ENCODE measurements at regions of chr12 and their contacts with region 1.

Region 1: GRCh38 chr12:113232840-113233585 is 11.7 kb downstream of the TPCN1 start:
- DNase-seq: peak; percentile 95 to 97 (median 96)
- H3K4me3 ChIP-seq: peak overlapping the region in 4 of 7 experiments; percentile 6 to 68 (median 48)
- H3K27ac ChIP-seq: peak overlapping the region; percentile 53 to 65
- H3K4me1 ChIP-seq: peaks cover 4 to 71% (median 57%) of the 10 kb centered on the region in 4 experiments
- H3K27me3 ChIP-seq: no peaks in the 10 kb centered on the region

Region 2: DNA sequence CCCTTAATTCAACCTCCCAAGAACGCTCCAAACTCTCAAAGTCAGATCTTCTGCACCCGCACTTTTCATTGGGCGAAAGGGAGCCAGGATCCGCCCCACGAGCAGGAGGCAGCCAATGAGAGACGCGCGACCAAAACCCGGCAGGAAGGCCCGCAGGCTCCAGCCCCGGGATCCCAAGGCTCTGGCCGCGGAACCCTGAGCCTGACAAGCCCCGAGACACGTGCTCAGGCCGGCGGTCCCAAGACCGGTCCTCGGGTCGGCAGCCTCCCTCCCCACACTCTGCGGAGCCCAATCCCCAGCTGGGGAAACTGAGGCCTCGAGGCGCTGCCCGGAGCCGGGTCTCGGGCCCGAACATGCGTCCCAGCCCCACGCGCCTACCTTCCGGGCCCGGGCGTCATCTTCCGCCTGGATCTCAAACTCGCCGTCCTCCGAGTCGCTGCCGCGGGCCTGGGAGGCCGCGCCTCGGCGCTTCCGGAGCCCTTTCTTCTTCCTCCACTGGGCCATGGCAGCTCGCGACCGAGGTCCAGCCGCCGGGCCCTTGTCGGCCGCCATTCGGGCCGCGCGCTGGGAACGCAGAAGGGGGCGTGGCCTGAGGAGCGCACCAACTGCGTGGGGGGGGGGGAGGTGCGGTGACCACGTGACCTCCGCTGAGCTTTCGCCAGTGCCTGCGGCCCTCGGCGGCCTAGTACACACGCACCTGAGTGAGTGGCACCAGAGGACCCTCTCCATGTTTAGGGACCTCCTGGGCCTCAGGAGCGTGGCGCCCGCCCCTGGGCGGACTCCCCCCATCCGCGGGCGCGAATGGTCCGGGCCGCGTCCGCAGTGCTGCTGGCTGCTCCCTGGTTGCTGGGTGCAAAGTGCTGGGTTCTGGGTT is 47.9 kb before region 1 on chr12 and contains the starts of genes DDX54 and RITA1:
- CTCF ChIA-PET with region 1: interaction called, 12 read pairs
- POLR2A ChIA-PET with region 1: interaction called, 3 read pairs
- DNase-seq: peak; percentile 90 to 94 (median 94)
- H3K4me3 ChIP-seq: peak within 1 kb of the TSS; percentile 74 to 90 (median 85)
- H3K27ac ChIP-seq: peak within 1 kb of the TSS; percentile 96 to 97
- H3K4me1 ChIP-seq: peaks cover 0 to 26% (median 22%) of the 10 kb centered on the region in 4 experiments
- H3K27me3 ChIP-seq: no peaks in the 10 kb centered on the region

Region 3: GRCh38 chr12:113196996-113197395 is 36.0 kb before region 1 on chr12:
- CTCF ChIA-PET with region 1: interaction called, 44 read pairs
- POLR2A ChIA-PET with region 1: interaction called, 3 read pairs
- DNase-seq: peak; percentile 84 to 91 (median 88)
- H3K4me3 ChIP-seq: no peak overlapping the region
- H3K27ac ChIP-seq: no peak overlapping the region
- H3K4me1 ChIP-seq: peaks cover 0 to 4% (median 0%) of the 10 kb centered on the region in 4 experiments
- H3K27me3 ChIP-seq: no peaks in the 10 kb centered on the region

Region 4: GRCh38 chr12:113208041-113208934 is 24.7 kb before region 1 on chr12:
- CTCF ChIA-PET with region 1: interaction called, 22 read pairs
- POLR2A ChIA-PET with region 1: interaction called, 12 read pairs
- DNase-seq: peak; percentile 90 to 98 (median 98)
- H3K4me3 ChIP-seq: peak overlapping the region in 2 of 7 experiments; percentile 17 to 26
- H3K27ac ChIP-seq: peak overlapping the region; percentile 62 to 84
- H3K4me1 ChIP-seq: peaks cover 16 to 64% (median 46%) of the 10 kb centered on the region in 4 experiments
- H3K27me3 ChIP-seq: no peaks in the 10 kb centered on the region

Region 5: DNA sequence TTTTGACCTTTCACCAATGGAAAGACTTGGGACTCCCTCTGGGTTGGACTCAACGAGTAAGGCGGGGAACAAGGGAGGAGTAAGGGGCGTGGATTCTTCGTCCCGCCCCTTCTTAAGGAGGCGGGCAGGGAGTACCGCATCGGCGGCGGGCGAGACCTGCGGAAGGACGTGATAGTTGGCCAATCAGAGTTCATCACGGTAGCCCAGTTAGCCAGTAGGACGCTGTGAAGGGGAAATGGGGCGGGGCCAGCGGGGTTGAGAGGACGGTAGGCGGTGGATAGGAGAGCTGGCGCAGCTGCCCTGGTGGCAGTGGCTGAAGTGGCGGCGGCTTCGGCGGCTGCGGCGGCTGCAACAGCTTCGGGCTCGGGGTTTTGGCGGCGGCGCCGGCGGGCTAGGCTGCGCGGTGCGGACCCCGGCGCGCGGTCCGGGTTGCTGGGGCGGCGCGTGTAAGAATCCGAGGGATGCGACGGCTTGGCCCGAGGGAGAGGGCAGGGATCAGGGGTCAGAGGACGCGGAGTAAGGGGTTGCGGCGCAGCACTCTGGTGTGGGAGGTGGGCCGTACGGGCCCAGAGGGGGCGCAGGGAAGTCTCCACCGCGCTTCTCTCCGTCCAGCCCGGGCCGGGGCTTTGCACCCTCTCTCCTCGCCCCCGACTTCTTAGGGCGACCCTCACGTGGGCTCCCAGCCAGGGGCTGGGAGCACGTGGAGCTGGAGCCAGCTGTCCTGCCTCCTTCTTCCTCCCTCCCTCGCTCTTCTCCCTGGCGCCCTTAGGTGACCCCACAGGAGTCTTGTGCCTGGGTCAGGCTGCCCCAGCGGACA is 11.6 kb before region 1 on chr12 and contains the start of gene TPCN1:
- CTCF ChIA-PET with region 1: interaction called, 91 read pairs
- POLR2A ChIA-PET with region 1: interaction called, 9 read pairs
- DNase-seq: peak; percentile 100
- H3K4me3 ChIP-seq: peak within 1 kb of the TSS; percentile 57 to 95 (median 74)
- H3K27ac ChIP-seq: peak within 1 kb of the TSS in 1 of 2 experiments; percentile 75
- H3K4me1 ChIP-seq: peaks cover 4 to 29% (median 27%) of the 10 kb centered on the region in 4 experiments
- H3K27me3 ChIP-seq: no peaks in the 10 kb centered on the region

Region 6: DNA sequence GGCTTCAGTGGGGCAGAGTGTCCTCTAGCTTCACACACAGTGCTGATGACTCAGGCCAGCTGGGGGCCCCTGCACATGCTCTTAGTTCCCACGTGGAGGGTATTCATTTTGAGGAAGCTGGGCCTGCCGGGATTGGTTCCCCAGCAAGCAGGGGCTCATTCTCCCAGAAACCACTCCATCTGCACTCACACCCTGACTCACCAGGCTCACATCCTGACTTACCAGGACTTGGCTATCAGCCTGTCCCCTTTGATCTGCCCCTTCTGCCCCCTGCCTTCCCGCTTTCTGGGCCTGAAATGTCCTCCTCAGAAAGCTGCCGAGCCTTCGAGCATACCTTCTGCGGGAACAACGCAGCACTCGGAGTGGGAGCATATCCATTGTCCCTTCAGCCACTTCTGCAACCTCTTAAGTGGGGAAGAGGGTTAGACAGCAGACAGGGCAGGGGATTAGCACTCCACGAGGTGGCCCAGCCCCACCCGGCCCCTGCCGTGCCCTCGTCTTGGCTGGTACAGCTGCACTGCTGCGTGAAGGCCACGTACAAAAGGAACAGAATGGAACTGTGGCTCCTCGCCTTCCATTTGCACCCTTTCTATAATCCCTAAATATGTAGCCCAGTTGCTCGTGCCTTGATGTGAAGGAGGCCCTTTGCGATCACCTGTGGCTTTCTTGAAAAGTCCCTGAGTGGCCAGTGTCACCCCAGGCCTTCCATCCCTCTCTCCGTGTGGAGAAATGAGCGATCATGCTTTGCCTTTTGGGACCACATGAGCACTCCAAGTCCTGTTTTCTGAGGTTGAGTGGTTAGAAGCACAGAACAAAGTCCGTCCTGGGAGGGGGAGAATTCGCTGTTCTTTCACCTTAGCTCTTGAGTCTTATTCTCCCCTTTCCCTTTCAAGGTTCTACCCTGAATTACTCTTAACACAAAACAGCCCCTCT is 14.4 kb after region 1 on chr12:
- CTCF ChIA-PET with region 1: interaction called, 10 read pairs
- POLR2A ChIA-PET with region 1: interaction called, 3 read pairs
- DNase-seq: peak; percentile 40 to 74 (median 61)
- H3K4me3 ChIP-seq: no peak overlapping the region
- H3K27ac ChIP-seq: no peak overlapping the region
- H3K4me1 ChIP-seq: peaks cover 0 to 36% (median 16%) of the 10 kb centered on the region in 4 experiments
- H3K27me3 ChIP-seq: no peaks in the 10 kb centered on the region

Measured in common myeloid progenitor, CD34-positive (primary cell).